CD8-positive, alpha-beta T cell (primary cell): ENCODE measurements at regions of chr5 and their contacts with region 1.

Region 1: DNA sequence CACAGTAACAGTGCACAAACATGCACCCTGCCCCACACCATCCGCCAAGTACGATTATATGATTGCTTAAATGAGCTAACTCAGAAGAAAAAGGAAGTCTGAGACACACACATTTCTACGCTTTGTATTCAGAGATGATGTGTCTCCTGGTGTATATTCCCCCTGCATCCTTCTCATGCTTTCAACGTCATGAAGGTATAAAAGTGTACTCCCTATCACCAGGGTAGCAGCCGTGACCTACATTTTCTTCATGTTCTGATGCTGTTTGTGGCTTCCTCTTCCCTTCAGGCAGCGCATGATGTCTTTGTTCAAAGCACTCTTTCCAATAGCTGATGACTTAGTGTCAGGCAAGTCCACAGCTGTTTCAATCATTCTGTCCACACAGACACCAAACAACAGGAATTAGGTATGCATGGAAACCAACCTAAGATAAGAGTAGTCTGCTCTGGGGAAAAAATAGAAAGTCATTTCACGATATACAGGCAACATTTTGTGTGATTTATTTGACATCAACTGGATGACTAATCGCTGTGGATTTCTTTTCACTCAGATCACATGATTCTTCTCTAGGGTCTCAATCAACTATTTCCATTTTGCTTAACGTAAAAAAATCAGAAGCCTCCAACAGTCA is 269.4 kb upstream of the PTGER4 start:
- DNase-seq: peak; percentile 46 to 98 (median 69)
- ATAC-seq: peak; percentile 81
- H3K4me3 ChIP-seq: peak overlapping the region; percentile 30 to 31
- H3K4me3 Mint-ChIP-seq: peak overlapping the region; percentile 65
- H3K27ac ChIP-seq: peak overlapping the region; percentile 96 to 97
- H3K27ac Mint-ChIP-seq: peak overlapping the region; percentile 99
- H3K4me1 ChIP-seq: peaks cover 59% of the 10 kb centered on the region
- H3K4me1 Mint-ChIP-seq: peaks cover 63% of the 10 kb centered on the region
- H3K27me3 ChIP-seq: no peaks in the 10 kb centered on the region
- H3K27me3 Mint-ChIP-seq: no peaks in the 10 kb centered on the region
- CTCF ChIP-seq: no peak

Region 2: DNA sequence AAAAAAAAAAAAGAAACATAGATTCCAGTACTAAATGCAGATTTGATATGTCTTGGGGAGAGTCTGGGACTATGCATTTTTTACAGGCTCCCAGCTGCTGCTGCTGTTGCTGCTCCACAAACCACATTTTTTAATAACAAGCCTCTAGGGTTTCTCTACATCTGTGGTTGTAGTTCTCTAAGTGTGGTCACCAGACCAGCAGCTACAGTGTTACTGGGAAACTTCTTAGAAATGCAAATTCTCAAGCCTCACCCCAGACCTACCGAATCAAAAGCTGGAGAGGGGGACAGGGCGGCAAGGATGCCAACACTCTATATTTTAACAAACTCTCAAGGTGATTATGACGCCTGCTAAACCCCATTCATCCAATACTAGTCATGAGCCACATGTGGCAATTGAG is 24.1 kb before region 1 on chr5:
- CTCF ChIA-PET with region 1: interaction called, 6 read pairs
- POLR2A ChIA-PET with region 1: interaction called, 12 read pairs
- intact Hi-C with region 1: loop called (anchors 2 kb)
- DNase-seq: peak in 5 of 9 experiments; percentile 14 to 81 (median 38)
- ATAC-seq: peak; percentile 57
- H3K4me3 ChIP-seq: no peak overlapping the region
- H3K4me3 Mint-ChIP-seq: no peak overlapping the region
- H3K27ac ChIP-seq: peak overlapping the region in 1 of 2 experiments; percentile 42
- H3K27ac Mint-ChIP-seq: peak overlapping the region; percentile 45
- H3K4me1 ChIP-seq: peaks cover 50% of the 10 kb centered on the region
- H3K4me1 Mint-ChIP-seq: peaks cover 79% of the 10 kb centered on the region
- H3K27me3 ChIP-seq: no peaks in the 10 kb centered on the region
- H3K27me3 Mint-ChIP-seq: no peaks in the 10 kb centered on the region
- CTCF ChIP-seq: no peak

Region 3: GRCh38 chr5:40429258-40430101 is 19.1 kb after region 1 on chr5:
- CTCF ChIA-PET with region 1: interaction called, 4 read pairs
- POLR2A ChIA-PET with region 1: interaction called, 4 read pairs
- intact Hi-C with region 1: loop called (anchors 2 kb)
- DNase-seq: peak in 2 of 9 experiments; percentile 26 to 59
- ATAC-seq: no peak
- H3K4me3 ChIP-seq: no peak overlapping the region
- H3K4me3 Mint-ChIP-seq: no peak overlapping the region
- H3K27ac ChIP-seq: peak overlapping the region in 1 of 2 experiments; percentile 33
- H3K27ac Mint-ChIP-seq: peak overlapping the region; percentile 4
- H3K4me1 ChIP-seq: peaks cover 7% of the 10 kb centered on the region
- H3K4me1 Mint-ChIP-seq: peaks cover 22% of the 10 kb centered on the region
- H3K27me3 ChIP-seq: no peaks in the 10 kb centered on the region
- H3K27me3 Mint-ChIP-seq: no peaks in the 10 kb centered on the region
- CTCF ChIP-seq: no peak

Region 4: DNA sequence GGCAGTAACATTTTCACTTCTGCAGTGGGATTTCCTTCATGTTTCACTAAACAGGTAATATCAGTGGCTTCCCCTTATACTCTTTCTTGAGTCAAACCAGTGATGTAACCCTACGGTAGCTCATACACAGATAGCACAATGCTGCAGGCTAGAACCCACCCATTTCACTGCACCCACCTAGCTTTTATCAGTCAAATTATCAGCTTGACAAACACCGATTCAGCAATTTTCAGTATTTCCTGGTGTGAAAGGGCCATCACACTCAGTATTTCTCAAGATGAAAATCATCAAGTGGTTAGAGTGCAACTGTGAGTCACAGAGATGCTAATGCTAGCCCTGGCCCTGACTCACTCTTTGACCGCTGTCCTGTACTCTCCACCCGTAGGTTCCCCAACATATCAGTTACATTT is 27.1 kb after region 1 on chr5:
- CTCF ChIA-PET with region 1: interaction called, 7 read pairs
- POLR2A ChIA-PET with region 1: interaction called, 23 read pairs
- intact Hi-C with region 1: loop called (anchors 1 kb)
- DNase-seq: peak in 6 of 9 experiments; percentile 17 to 85 (median 32)
- ATAC-seq: peak; percentile 20
- H3K4me3 ChIP-seq: no peak overlapping the region
- H3K4me3 Mint-ChIP-seq: no peak overlapping the region
- H3K27ac ChIP-seq: peak overlapping the region; percentile 51 to 91
- H3K27ac Mint-ChIP-seq: peak overlapping the region; percentile 86
- H3K4me1 ChIP-seq: peaks cover 40% of the 10 kb centered on the region
- H3K4me1 Mint-ChIP-seq: peaks cover 67% of the 10 kb centered on the region
- H3K27me3 ChIP-seq: no peaks in the 10 kb centered on the region
- H3K27me3 Mint-ChIP-seq: no peaks in the 10 kb centered on the region
- CTCF ChIP-seq: no peak

Region 5: DNA sequence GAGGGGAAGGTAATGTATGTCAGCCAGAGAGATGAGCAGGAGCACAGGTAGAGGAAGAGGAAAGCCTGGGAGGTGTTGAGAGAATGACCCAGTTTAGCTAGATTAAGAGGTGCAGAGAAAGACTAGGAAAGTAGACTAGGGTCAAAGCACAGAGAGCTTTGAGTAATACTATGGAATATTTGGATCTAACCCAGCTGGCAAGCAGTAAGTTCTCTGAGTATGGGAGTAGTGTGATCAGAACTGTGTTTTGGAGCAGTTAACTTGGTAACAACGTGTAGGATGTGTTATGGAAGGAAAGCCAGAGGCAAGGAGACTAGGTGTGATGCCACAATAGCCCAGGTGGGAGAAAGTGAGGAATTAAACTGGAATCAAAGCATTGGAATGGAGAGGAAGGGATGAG is 184.5 kb after region 1 on chr5:
- CTCF ChIA-PET with region 1: no interaction called
- POLR2A ChIA-PET with region 1: no interaction called
- intact Hi-C with region 1: no loop called
- DNase-seq: no peak
- ATAC-seq: no peak
- H3K4me3 ChIP-seq: no peak overlapping the region
- H3K4me3 Mint-ChIP-seq: no peak overlapping the region
- H3K27ac ChIP-seq: no peak overlapping the region
- H3K27ac Mint-ChIP-seq: no peak overlapping the region
- H3K4me1 ChIP-seq: no peaks in the 10 kb centered on the region
- H3K4me1 Mint-ChIP-seq: peaks cover 19% of the 10 kb centered on the region
- H3K27me3 ChIP-seq: no peaks in the 10 kb centered on the region
- H3K27me3 Mint-ChIP-seq: no peaks in the 10 kb centered on the region
- CTCF ChIP-seq: no peak

Region 6: DNA sequence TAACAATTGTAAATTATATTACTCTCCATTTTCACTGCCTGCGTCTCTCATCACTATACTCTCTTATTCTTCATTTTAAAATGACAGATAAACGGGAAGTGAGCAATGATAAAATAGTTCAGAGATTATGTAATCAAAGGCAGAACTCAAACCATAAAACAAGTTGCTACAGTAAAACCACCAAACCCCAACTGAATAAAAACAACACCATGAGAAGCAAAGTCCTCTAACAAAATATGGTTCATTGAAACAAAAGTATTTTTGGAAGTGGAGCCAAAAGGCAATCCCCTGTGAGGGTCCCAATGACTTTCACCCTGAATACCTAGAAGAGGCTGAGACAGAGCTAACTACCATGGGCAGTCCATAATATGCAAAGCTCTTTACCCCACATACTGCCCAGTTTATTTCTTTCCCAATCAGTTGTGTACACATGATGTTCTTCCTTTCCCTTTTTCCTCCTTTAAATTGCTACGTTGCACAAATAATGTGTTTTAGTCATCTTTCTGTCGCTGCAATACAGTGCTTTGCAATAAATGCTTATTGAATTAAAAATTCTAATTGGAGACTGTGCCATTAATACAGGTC is 205.3 kb after region 1 on chr5:
- CTCF ChIA-PET with region 1: no interaction called
- POLR2A ChIA-PET with region 1: interaction called, 3 read pairs
- intact Hi-C with region 1: loop called in 1 of 2 experiments (anchors 10 kb)
- DNase-seq: peak in 2 of 9 experiments; percentile 21 to 47
- ATAC-seq: peak; percentile 73
- H3K4me3 ChIP-seq: no peak overlapping the region
- H3K4me3 Mint-ChIP-seq: peak overlapping the region; percentile 44
- H3K27ac ChIP-seq: peak overlapping the region in 1 of 2 experiments; percentile 16
- H3K27ac Mint-ChIP-seq: peak overlapping the region; percentile 80
- H3K4me1 ChIP-seq: peaks cover 10% of the 10 kb centered on the region
- H3K4me1 Mint-ChIP-seq: peaks cover 29% of the 10 kb centered on the region
- H3K27me3 ChIP-seq: no peaks in the 10 kb centered on the region
- H3K27me3 Mint-ChIP-seq: no peaks in the 10 kb centered on the region
- CTCF ChIP-seq: no peak

Region 7: DNA sequence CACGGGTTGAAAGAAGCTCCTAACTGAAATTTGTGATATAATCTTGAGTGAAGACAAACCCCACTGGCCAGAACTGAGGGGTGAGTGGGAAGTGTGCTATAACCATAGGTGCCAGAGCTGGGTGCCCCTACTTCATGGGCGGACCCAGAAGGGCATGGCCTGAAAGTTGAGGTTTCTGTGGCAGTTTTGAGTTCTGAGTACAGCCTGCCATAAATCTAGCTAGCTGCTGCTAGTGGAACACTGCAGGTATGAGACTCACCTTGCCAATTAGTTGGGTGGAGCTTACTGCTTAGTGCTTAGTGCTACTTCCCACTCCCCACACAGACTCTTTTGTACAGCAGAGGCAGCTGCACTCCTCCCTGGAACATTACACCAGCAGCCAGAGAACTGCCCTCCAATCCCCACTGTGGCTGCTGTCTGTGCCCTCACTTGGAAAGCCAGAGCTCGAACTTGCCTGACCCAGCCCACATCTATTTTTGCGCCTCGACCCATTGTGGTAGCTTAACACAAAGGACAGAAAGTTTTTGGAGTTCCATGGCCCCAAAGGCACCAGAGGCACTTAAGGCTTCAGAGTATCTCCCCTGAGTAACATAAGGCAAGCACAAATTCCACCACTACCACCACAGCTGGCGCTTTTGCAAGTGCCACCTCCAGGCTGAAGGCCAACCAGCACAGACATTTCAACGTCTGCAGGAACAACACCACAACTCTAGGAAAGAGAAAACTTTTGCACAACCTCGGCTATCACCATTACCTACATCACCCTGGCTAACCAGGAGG is 242.3 kb after region 1 on chr5:
- CTCF ChIA-PET with region 1: no interaction called
- POLR2A ChIA-PET with region 1: interaction called, 8 read pairs
- intact Hi-C with region 1: loop called in 1 of 2 experiments (anchors 1 kb)
- DNase-seq: peak in 3 of 9 experiments; percentile 41 to 58 (median 44)
- ATAC-seq: peak; percentile 39
- H3K4me3 ChIP-seq: no peak overlapping the region
- H3K4me3 Mint-ChIP-seq: peak overlapping the region; percentile 79
- H3K27ac ChIP-seq: peak overlapping the region; percentile 38 to 71
- H3K27ac Mint-ChIP-seq: peak overlapping the region; percentile 93
- H3K4me1 ChIP-seq: peaks cover 56% of the 10 kb centered on the region
- H3K4me1 Mint-ChIP-seq: peaks cover 78% of the 10 kb centered on the region
- H3K27me3 ChIP-seq: no peaks in the 10 kb centered on the region
- H3K27me3 Mint-ChIP-seq: no peaks in the 10 kb centered on the region
- CTCF ChIP-seq: no peak